ENCODE measurements at regions of chr2 and their contacts with region 1.

Region 1: GRCh38 chr2:121530212-121530705 is 421 bp upstream of the RNU4ATAC start:
- DNase-seq: peak in 13 of 14 experiments; percentile 77 to 92 (median 81)
- ATAC-seq: peak; percentile 72
- H3K4me3 ChIP-seq: peak overlapping the region; percentile 94
- H3K4me3 Mint-ChIP-seq: peak overlapping the region; percentile 97
- H3K27ac ChIP-seq: peak overlapping the region; percentile 99 to 100
- H3K27ac Mint-ChIP-seq: peak overlapping the region; percentile 96
- H3K4me1 ChIP-seq: peaks cover 18% of the 10 kb centered on the region
- H3K4me1 Mint-ChIP-seq: peaks cover 48% of the 10 kb centered on the region
- H3K27me3 ChIP-seq: no peaks in the 10 kb centered on the region
- H3K27me3 Mint-ChIP-seq: no peaks in the 10 kb centered on the region
- CTCF ChIP-seq: no peak

Region 2: GRCh38 chr2:121649596-121650314 is 119.5 kb after region 1 on chr2:
- CTCF ChIA-PET with region 1: interaction called, 19 read pairs
- POLR2A ChIA-PET with region 1: interaction called, 154 read pairs
- intact Hi-C with region 1: loop called (anchors 2 kb)
- DNase-seq: peak; percentile 90 to 99 (median 95)
- ATAC-seq: peak; percentile 92
- H3K4me3 ChIP-seq: peak overlapping the region; percentile 77
- H3K4me3 Mint-ChIP-seq: peak overlapping the region; percentile 98
- H3K27ac ChIP-seq: peak overlapping the region; percentile 94
- H3K27ac Mint-ChIP-seq: peak overlapping the region; percentile 99
- H3K4me1 ChIP-seq: peaks cover 25% of the 10 kb centered on the region
- H3K4me1 Mint-ChIP-seq: peaks cover 78% of the 10 kb centered on the region
- H3K27me3 ChIP-seq: no peaks in the 10 kb centered on the region
- H3K27me3 Mint-ChIP-seq: peaks cover 4% of the 10 kb centered on the region
- CTCF ChIP-seq: no peak

Region 3: DNA sequence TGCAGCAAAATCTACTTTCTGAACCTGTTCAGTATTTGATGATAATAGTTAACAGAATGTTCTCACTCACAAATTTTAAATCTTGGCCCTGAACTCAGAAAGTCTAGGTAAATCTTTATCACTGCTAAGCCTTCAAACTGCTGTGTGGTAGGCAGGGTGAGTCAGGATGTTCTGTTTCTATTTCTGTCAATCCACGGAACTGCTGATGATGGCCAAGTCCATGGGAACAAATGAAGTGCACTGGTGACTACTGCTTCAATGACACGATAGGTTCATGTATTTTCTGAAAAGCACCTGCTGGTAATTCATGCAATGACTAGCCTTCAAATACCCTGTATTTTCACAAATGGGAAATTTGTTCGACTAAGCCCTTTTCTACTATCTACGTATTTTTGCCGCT is 192.2 kb after region 1 on chr2:
- CTCF ChIA-PET with region 1: interaction called, 17 read pairs
- POLR2A ChIA-PET with region 1: interaction called, 28 read pairs
- intact Hi-C with region 1: loop called (anchors 1 kb)
- DNase-seq: peak in 1 of 14 experiments; percentile 44
- ATAC-seq: no peak
- H3K4me3 ChIP-seq: no peak overlapping the region
- H3K4me3 Mint-ChIP-seq: no peak overlapping the region
- H3K27ac ChIP-seq: no peak overlapping the region
- H3K27ac Mint-ChIP-seq: no peak overlapping the region
- H3K4me1 ChIP-seq: peaks cover 8% of the 10 kb centered on the region
- H3K4me1 Mint-ChIP-seq: peaks cover 6% of the 10 kb centered on the region
- H3K27me3 ChIP-seq: no peaks in the 10 kb centered on the region
- H3K27me3 Mint-ChIP-seq: no peaks in the 10 kb centered on the region
- CTCF ChIP-seq: no peak

Region 4: GRCh38 chr2:121755236-121756111 is 225.2 kb after region 1 on chr2 and contains the start of gene TSN:
- CTCF ChIA-PET with region 1: interaction called, 3 read pairs
- POLR2A ChIA-PET with region 1: interaction called, 22 read pairs
- intact Hi-C with region 1: loop called (anchors 1 to 5 kb)
- DNase-seq: peak; percentile 94 to 99 (median 97)
- ATAC-seq: peak; percentile 99
- H3K4me3 ChIP-seq: peak within 1 kb of the TSS; percentile 94
- H3K4me3 Mint-ChIP-seq: peak within 1 kb of the TSS; percentile 91
- H3K27ac ChIP-seq: peak within 1 kb of the TSS; percentile 66 to 72
- H3K27ac Mint-ChIP-seq: peak within 1 kb of the TSS; percentile 91
- H3K4me1 ChIP-seq: peaks cover 13% of the 10 kb centered on the region
- H3K4me1 Mint-ChIP-seq: peaks cover 33% of the 10 kb centered on the region
- H3K27me3 ChIP-seq: no peaks in the 10 kb centered on the region
- H3K27me3 Mint-ChIP-seq: no peaks in the 10 kb centered on the region
- CTCF ChIP-seq: no peak
- total RNA-seq, gene TSN: 49.1 to 50.9 TPM

Measured in CD4-positive, alpha-beta T cell (primary cell).